Caco-2 (cell line): ENCODE measurements at regions of chr15 and their contacts with region 1.

Region 1: GRCh38 chr15:64836023-64836536 is 5.6 kb upstream of the PLEKHO2 start:
- DNase-seq: no peak
- H3K4me3 ChIP-seq: no peak overlapping the region
- H3K4me3 Mint-ChIP-seq: peak overlapping the region; percentile 47
- H3K27ac Mint-ChIP-seq: no peak overlapping the region
- H3K4me1 ChIP-seq: no peaks in the 10 kb centered on the region
- H3K4me1 Mint-ChIP-seq: peaks cover 14% of the 10 kb centered on the region
- H3K27me3 ChIP-seq: no peaks in the 10 kb centered on the region
- H3K27me3 Mint-ChIP-seq: peaks cover 2% of the 10 kb centered on the region
- CTCF ChIP-seq: no peak

Region 2: GRCh38 chr15:64825431-64826294 is 10.4 kb before region 1 on chr15 and contains the start of gene PIF1:
- CTCF ChIA-PET with region 1: interaction called, 4 read pairs
- POLR2A ChIA-PET with region 1: interaction called, 8 read pairs
- intact Hi-C with region 1: loop called (anchors 1 kb)
- DNase-seq: peak; percentile 94 to 97
- H3K4me3 ChIP-seq: peak within 1 kb of the TSS; percentile 67
- H3K4me3 Mint-ChIP-seq: peak within 1 kb of the TSS; percentile 75
- H3K27ac Mint-ChIP-seq: peak within 1 kb of the TSS; percentile 93
- H3K4me1 ChIP-seq: peaks cover 3% of the 10 kb centered on the region; the same call in 1 of the 2 replicates
- H3K4me1 Mint-ChIP-seq: no peaks in the 10 kb centered on the region
- H3K27me3 ChIP-seq: no peaks in the 10 kb centered on the region
- H3K27me3 Mint-ChIP-seq: no peaks in the 10 kb centered on the region
- CTCF ChIP-seq: no peak
- total RNA-seq, gene PIF1: 45.8 and 47.9 TPM in 2 replicates

Region 3: DNA sequence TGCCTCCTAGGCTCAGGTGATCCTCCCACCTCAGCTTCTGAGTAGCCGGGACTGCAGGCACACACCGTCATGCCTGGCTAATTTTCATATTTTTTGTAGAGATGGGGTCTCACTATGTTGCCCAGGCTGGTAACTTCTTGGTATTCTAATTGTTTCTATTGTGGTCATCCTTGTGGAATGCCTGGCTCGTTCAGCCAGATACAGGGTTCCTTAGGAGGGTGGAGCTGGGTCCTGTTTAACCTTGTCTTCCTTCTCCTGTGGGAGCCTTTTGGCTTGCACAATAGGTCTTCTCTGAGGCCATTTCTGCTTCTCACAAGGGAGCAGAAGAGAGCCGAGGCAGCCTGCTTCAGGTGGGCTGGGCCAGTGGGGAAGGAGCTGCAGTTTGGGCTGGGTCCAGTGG is 21.3 kb after region 1 on chr15:
- CTCF ChIA-PET with region 1: no interaction called
- POLR2A ChIA-PET with region 1: no interaction called
- intact Hi-C with region 1: no loop called
- DNase-seq: no peak
- H3K4me3 ChIP-seq: no peak overlapping the region
- H3K4me3 Mint-ChIP-seq: no peak overlapping the region
- H3K27ac Mint-ChIP-seq: no peak overlapping the region
- H3K4me1 ChIP-seq: 0 out of 2 replicates have a peak, but pooled peaks cover 6% of the 10 kb centered on the region
- H3K4me1 Mint-ChIP-seq: peaks cover 7% of the 10 kb centered on the region
- H3K27me3 ChIP-seq: no peaks in the 10 kb centered on the region
- H3K27me3 Mint-ChIP-seq: no peaks in the 10 kb centered on the region
- CTCF ChIP-seq: no peak